Mammary epithelial cell (primary cell): ENCODE measurements at regions of chr13 and their contacts with region 1.

Region 1: GRCh38 chr13:37769078-37769477 is 100.5 kb downstream of the TRPC4 start:
- DNase-seq: no peak
- H3K4me3 ChIP-seq: no peak overlapping the region
- H3K27ac ChIP-seq: no peak overlapping the region
- H3K4me1 ChIP-seq: no peaks in the 10 kb centered on the region
- H3K27me3 ChIP-seq: peaks cover 2% of the 10 kb centered on the region
- CTCF ChIP-seq: peak in 1 of 2 donors; percentile 39

Region 2: GRCh38 chr13:37640499-37640898 is 128.6 kb before region 1 on chr13:
- CTCF ChIA-PET with region 1: no interaction called
- dilution Hi-C with region 1: no loop called
- in situ Hi-C with region 1: no loop called
- intact Hi-C with region 1: loop called (anchors 5 kb)
- DNase-seq: peak; percentile 21
- H3K4me3 ChIP-seq: no peak overlapping the region
- H3K27ac ChIP-seq: no peak overlapping the region
- H3K4me1 ChIP-seq: no peaks in the 10 kb centered on the region
- H3K27me3 ChIP-seq: no peaks in the 10 kb centered on the region
- CTCF ChIP-seq: peak; percentile 53 to 74

Region 3: DNA sequence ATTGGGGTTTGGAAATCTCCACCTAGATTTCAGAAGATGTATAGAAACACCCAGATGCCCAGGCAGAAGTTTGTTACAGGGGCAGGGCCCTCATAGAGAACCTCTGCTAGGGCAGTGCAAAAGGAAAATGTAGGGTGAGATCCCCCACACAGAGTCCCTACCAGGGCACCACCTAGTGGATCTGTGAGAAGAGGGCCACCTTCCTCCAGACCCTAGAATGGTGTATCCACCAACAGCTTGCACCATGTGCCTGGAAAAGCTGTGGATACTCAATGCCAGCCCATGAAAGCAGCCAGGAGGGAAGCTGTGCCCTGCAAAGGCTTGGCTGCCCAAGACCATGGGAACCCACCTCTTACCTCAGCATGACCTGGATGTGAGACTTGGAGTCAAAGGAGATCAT is 68.0 kb after region 1 on chr13:
- CTCF ChIA-PET with region 1: no interaction called
- dilution Hi-C with region 1: no loop called
- in situ Hi-C with region 1: no loop called
- intact Hi-C with region 1: no loop called
- DNase-seq: no peak
- H3K4me3 ChIP-seq: no peak overlapping the region
- H3K27ac ChIP-seq: no peak overlapping the region
- H3K4me1 ChIP-seq: no peaks in the 10 kb centered on the region
- H3K27me3 ChIP-seq: peaks cover 2% of the 10 kb centered on the region
- CTCF ChIP-seq: no peak

Region 4: GRCh38 chr13:38045307-38046048 is 276.4 kb after region 1 on chr13:
- CTCF ChIA-PET with region 1: no interaction called
- dilution Hi-C with region 1: no loop called
- in situ Hi-C with region 1: no loop called
- intact Hi-C with region 1: loop called (anchors 5 kb)
- DNase-seq: peak; percentile 27
- H3K4me3 ChIP-seq: no peak overlapping the region
- H3K27ac ChIP-seq: no peak overlapping the region
- H3K4me1 ChIP-seq: no peaks in the 10 kb centered on the region
- H3K27me3 ChIP-seq: no peaks in the 10 kb centered on the region
- CTCF ChIP-seq: peak; percentile 56 to 71

Region 5: GRCh38 chr13:38530492-38530891 is 761.4 kb after region 1 on chr13:
- CTCF ChIA-PET with region 1: no interaction called
- dilution Hi-C with region 1: no loop called
- in situ Hi-C with region 1: no loop called
- intact Hi-C with region 1: loop called (anchors 5 kb)
- DNase-seq: peak; percentile 5
- H3K4me3 ChIP-seq: no peak overlapping the region
- H3K27ac ChIP-seq: no peak overlapping the region
- H3K4me1 ChIP-seq: no peaks in the 10 kb centered on the region
- H3K27me3 ChIP-seq: peaks cover 3% of the 10 kb centered on the region
- CTCF ChIP-seq: peak; percentile 47 to 54

Region 6: GRCh38 chr13:38743466-38743865 is 974.4 kb after region 1 on chr13:
- CTCF ChIA-PET with region 1: no interaction called
- dilution Hi-C with region 1: no loop called
- in situ Hi-C with region 1: no loop called
- intact Hi-C with region 1: no loop called
- DNase-seq: peak; percentile 13
- H3K4me3 ChIP-seq: no peak overlapping the region
- H3K27ac ChIP-seq: no peak overlapping the region
- H3K4me1 ChIP-seq: no peaks in the 10 kb centered on the region
- H3K27me3 ChIP-seq: peaks cover 2% of the 10 kb centered on the region
- CTCF ChIP-seq: no peak